BJ (cell line): ENCODE measurements at regions of chr12 and their contacts with region 1.

Region 1: GRCh38 chr12:57005980-57006808 is at the start of gene ZBTB39:
- DNase-seq: no peak
- H3K4me3 ChIP-seq: peak within 1 kb of the TSS; percentile 84
- H3K27me3 ChIP-seq: no peaks in the 10 kb centered on the region
- CTCF ChIP-seq: peak; percentile 49
- polyA plus RNA-seq, gene ZBTB39: 3.9 and 4.2 TPM in 2 replicates

Region 2: GRCh38 chr12:56759263-56759908 is 246.8 kb before region 1 on chr12:
- CTCF ChIA-PET with region 1: interaction called, 220 read pairs
- POLR2A ChIA-PET with region 1: no interaction called
- DNase-seq: no peak
- H3K4me3 ChIP-seq: no peak overlapping the region
- H3K27me3 ChIP-seq: no peaks in the 10 kb centered on the region
- CTCF ChIP-seq: no peak

Region 3: GRCh38 chr12:56987551-56988053 is 18.6 kb before region 1 on chr12:
- CTCF ChIA-PET with region 1: interaction called, 56 read pairs
- POLR2A ChIA-PET with region 1: no interaction called
- DNase-seq: no peak
- H3K4me3 ChIP-seq: no peak overlapping the region
- H3K27me3 ChIP-seq: no peaks in the 10 kb centered on the region
- CTCF ChIP-seq: peak; percentile 97

Region 4: DNA sequence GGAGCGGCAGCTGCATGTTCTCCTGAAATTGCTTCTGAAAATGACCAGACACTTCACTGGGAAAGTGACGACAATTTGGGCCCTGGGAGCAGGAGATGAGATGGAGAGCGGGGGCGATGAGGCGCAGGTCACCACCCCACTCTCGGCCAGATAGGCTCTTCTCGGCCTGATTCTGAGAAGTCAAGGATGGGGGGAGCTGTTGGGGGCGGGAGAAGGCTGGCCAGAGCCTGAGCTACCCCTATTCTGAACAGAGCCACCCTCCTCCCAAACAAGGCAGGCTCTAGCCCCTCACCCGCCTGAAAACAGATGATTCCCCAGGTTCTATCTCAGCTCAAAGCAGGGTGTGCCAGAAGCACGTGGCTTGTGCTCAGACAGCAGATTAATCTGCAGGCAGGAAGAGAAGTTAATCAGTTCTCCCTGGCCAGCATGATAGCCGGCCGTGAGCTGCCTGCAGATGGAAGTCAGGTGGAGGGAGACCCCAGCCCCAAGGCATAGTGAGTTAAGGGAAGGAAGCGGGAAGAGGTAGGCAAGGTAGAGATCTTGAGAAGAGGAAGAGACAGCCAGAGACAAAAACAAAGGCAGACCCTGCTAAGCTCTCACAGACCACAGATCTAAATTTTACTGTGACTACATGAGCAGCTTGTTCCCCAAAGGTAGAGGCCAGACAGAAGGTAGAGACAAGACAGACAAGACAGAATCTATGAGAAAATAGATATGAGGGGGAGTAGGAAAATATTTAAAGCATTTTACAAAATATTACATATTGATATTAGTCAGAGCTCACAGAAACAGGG is 21.0 kb after region 1 on chr12:
- CTCF ChIA-PET with region 1: interaction called, 32 read pairs
- POLR2A ChIA-PET with region 1: no interaction called
- DNase-seq: no peak
- H3K4me3 ChIP-seq: no peak overlapping the region
- H3K27me3 ChIP-seq: peaks cover 25% of the 10 kb centered on the region
- CTCF ChIP-seq: no peak

Region 5: GRCh38 chr12:57058454-57058853 is 52.3 kb after region 1 on chr12:
- CTCF ChIA-PET with region 1: interaction called, 148 read pairs
- POLR2A ChIA-PET with region 1: no interaction called
- DNase-seq: no peak
- H3K4me3 ChIP-seq: no peak overlapping the region
- H3K27me3 ChIP-seq: no peaks in the 10 kb centered on the region
- CTCF ChIP-seq: no peak